ENCODE measurements at regions of chr1 and their contacts with region 1.

Region 1: GRCh38 chr1:235971571-235972310 is 93.1 kb downstream of the NID1 start:
- DNase-seq: peak; percentile 93
- ATAC-seq: peak; percentile 98
- H3K4me3 Mint-ChIP-seq: peak overlapping the region; percentile 60
- H3K27ac Mint-ChIP-seq: peak overlapping the region; percentile 82
- H3K4me1 Mint-ChIP-seq: peaks cover 15% of the 10 kb centered on the region
- H3K27me3 Mint-ChIP-seq: peaks cover 2% of the 10 kb centered on the region

Region 2: DNA sequence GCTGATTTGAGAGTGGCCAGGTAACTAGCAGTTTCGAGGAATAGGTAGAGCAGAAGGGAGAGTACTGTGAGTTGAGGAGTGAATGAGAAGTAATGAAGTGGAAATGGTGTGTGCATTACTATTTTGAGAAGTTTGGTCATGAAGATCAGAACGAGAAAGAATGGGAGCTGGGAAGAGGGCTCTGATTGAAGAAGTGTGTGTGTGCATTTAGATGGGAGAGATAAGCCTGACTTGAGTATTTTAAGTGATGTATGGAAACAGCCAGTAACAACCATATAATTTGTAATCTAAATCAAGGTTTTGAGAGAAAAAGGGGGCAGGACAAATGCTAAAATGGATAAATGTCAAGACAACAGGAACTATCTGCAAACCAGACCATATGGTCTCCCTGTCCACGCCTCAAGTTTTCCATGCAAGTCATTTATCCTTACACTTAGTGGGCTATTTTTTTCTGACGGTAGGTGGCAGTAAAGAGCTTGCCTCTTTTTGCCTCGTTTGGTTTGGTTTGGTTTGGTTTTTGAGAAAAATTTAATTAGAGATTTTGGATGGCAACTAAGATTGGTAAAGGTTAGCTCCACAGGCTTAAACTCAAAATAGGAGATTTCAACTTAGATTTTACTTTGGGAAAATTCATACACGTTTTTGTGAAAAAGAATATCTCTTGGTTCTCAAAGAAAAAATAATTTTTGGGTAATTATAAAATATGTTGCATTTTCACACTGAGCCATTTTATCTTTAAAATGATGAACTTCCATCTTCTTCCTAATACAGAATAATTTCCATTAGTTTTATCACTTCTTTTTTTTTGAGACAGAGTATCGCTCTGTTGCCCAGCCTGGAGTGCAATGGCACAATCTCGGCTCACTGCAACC is 458.0 kb before region 1 on chr1:
- CTCF ChIA-PET with region 1: interaction called, 3 read pairs
- POLR2A ChIA-PET with region 1: no interaction called
- intact Hi-C with region 1: loop called (anchors 2 kb)
- DNase-seq: peak; percentile 50
- ATAC-seq: peak; percentile 79
- H3K4me3 Mint-ChIP-seq: no peak overlapping the region
- H3K27ac Mint-ChIP-seq: no peak overlapping the region
- H3K4me1 Mint-ChIP-seq: peaks cover 4% of the 10 kb centered on the region
- H3K27me3 Mint-ChIP-seq: peaks cover 2% of the 10 kb centered on the region

Region 3: DNA sequence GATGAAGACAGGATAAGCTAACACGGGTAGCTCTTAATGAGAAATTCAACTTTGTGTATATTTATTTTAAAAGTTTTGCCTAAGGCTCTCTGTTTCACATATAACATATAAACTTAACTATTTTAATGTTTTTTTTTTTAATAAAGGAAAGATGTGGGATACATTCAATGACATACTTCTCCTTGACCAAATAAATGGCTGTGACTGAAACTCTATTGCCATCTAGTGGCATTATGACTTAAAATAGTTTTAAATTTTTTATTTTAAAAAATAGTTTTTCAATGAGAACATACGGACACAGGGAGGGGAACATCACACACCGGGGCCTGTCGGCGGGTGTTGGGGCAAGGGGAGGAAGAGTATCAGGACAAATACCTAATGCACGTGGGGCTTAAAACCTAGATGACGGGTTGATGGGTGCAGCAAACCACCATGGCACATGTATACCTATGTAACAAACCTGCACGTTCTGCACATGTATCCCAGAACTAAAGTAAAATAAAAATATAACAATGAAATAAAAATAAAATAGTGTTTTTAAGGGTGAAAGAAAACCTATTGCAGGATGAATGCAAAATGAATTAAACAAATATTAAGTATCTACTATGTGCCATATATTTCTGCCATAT is 188.5 kb before region 1 on chr1:
- CTCF ChIA-PET with region 1: interaction called, 9 read pairs
- POLR2A ChIA-PET with region 1: no interaction called
- intact Hi-C with region 1: loop called in 1 of 2 experiments (anchors 5 kb)
- DNase-seq: no peak
- ATAC-seq: no peak
- H3K4me3 Mint-ChIP-seq: no peak overlapping the region
- H3K27ac Mint-ChIP-seq: no peak overlapping the region
- H3K4me1 Mint-ChIP-seq: no peaks in the 10 kb centered on the region
- H3K27me3 Mint-ChIP-seq: no peaks in the 10 kb centered on the region

Region 4: DNA sequence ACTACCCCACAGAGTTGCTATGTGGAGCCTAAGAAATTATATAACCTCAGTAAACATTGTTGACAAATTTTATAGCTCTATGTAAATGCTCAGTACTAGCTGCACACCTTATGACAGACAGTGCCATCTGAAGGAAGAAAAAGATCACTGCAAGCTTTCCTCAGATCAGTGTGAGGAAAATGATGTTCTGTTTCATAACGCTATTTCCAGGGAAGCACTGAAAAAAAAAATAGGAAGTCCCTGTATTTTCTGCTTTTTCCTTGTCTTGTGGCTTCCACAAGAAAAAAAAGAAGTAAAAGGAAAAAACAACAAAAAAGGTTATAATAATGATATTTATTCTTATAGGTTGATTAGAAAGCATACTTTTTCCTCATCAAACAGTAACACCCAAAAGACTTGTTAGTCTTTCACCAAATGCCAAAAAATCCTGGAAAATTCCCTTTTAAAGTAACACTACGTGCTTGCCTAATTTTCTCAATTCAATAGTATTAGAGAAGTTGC is 128.2 kb before region 1 on chr1:
- CTCF ChIA-PET with region 1: interaction called, 19 read pairs
- POLR2A ChIA-PET with region 1: no interaction called
- intact Hi-C with region 1: loop called in 1 of 2 experiments (anchors 5 kb)
- DNase-seq: no peak
- ATAC-seq: peak; percentile 73
- H3K4me3 Mint-ChIP-seq: no peak overlapping the region
- H3K27ac Mint-ChIP-seq: no peak overlapping the region
- H3K4me1 Mint-ChIP-seq: peaks cover 45% of the 10 kb centered on the region
- H3K27me3 Mint-ChIP-seq: no peaks in the 10 kb centered on the region

Region 5: GRCh38 chr1:235888119-235888643 is 83.6 kb before region 1 on chr1:
- CTCF ChIA-PET with region 1: interaction called, 6 read pairs
- POLR2A ChIA-PET with region 1: no interaction called
- intact Hi-C with region 1: loop called in 1 of 2 experiments (anchors 5 kb)
- DNase-seq: peak; percentile 78
- ATAC-seq: peak; percentile 88
- H3K4me3 Mint-ChIP-seq: peak overlapping the region; percentile 6
- H3K27ac Mint-ChIP-seq: peak overlapping the region; percentile 84
- H3K4me1 Mint-ChIP-seq: peaks cover 41% of the 10 kb centered on the region
- H3K27me3 Mint-ChIP-seq: no peaks in the 10 kb centered on the region

Region 6: GRCh38 chr1:235954306-235955283 is 17.1 kb before region 1 on chr1:
- CTCF ChIA-PET with region 1: interaction called, 24 read pairs
- POLR2A ChIA-PET with region 1: no interaction called
- intact Hi-C with region 1: loop called in 1 of 2 experiments (anchors 2 kb)
- DNase-seq: peak; percentile 62
- ATAC-seq: peak; percentile 46
- H3K4me3 Mint-ChIP-seq: no peak overlapping the region
- H3K27ac Mint-ChIP-seq: no peak overlapping the region
- H3K4me1 Mint-ChIP-seq: peaks cover 34% of the 10 kb centered on the region
- H3K27me3 Mint-ChIP-seq: no peaks in the 10 kb centered on the region

Region 7: DNA sequence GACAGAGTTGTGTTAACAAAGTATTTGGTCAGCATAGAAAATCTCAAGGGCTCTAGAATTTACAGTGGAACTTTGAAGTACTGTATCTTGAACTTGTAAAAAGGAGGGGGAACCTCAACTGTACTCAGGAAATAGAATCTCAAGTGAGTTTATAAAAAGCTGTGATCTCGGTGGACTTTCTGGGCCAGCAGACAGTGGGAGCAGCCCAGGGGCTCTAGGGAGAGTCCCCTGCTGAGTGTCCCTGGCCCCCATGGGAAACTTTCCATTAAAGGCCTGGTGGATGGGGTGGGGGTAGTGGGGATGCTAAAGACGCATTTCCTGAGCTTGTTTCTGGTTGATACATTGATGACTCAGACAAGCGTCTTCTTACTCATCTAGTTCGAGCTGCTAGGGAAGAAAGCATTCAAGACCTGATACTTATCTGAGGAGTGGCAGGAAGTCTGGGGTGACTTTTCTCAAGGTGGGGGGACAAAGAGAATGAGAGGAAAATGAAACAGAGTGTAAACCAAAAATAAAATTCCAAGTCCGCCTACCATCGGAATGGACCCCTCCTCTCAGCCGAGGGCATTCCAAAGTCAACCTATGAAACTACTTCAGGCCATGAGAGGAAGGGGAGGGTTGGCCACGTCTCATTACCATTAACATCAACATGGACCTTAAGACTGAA is 27.7 kb after region 1 on chr1:
- CTCF ChIA-PET with region 1: interaction called, 27 read pairs
- POLR2A ChIA-PET with region 1: interaction called, 3 read pairs
- intact Hi-C with region 1: no loop called
- DNase-seq: peak; percentile 76
- ATAC-seq: peak; percentile 85
- H3K4me3 Mint-ChIP-seq: peak overlapping the region; percentile 32
- H3K27ac Mint-ChIP-seq: peak overlapping the region; percentile 94
- H3K4me1 Mint-ChIP-seq: peaks cover 58% of the 10 kb centered on the region
- H3K27me3 Mint-ChIP-seq: no peaks in the 10 kb centered on the region